Activated naive CD4-positive, alpha-beta T cell treated with anti-CD3 and anti-CD28 coated beads for 36 hours (primary cell): ENCODE measurements at regions of chr14 and their contacts with region 1.

Region 1: DNA sequence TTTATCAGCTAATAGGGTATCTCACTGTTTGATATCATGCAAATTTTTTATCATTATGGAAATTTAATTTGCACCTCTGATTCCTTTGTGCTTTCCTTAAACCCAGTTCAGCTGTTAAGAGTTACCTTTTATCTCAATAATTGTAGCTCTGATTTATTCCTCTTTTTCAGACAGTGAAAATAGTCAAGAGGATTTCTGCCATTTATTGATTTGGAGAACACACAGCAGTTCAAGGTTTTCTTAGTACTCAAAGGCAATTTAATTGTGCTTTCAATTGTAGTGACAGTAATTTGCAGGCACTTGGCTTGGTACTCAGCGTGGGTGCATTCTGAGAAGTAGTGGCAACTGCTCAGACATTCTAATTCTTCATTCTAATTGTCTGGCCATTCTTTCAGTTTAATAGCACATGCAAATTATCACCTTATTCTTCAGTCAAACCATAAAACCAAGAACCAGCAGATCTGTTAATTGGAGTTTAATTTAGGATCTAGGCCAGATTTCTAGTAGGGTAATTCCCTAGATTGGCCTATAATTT is 709.3 kb downstream of the RPS29 start:
- DNase-seq: no peak
- H3K4me3 Mint-ChIP-seq: no peak overlapping the region
- H3K27ac Mint-ChIP-seq: no peak overlapping the region
- H3K4me1 Mint-ChIP-seq: no peaks in the 10 kb centered on the region
- H3K27me3 Mint-ChIP-seq: no peaks in the 10 kb centered on the region

Region 2: GRCh38 chr14:49019467-49020115 is 142.7 kb after region 1 on chr14:
- CTCF ChIA-PET with region 1: no interaction called
- intact Hi-C with region 1: loop called (anchors 2 kb)
- DNase-seq: no peak
- H3K4me3 Mint-ChIP-seq: no peak overlapping the region
- H3K27ac Mint-ChIP-seq: no peak overlapping the region
- H3K4me1 Mint-ChIP-seq: no peaks in the 10 kb centered on the region
- H3K27me3 Mint-ChIP-seq: no peaks in the 10 kb centered on the region